AG04449 (cell line): ENCODE measurements at regions of chr17 and their contacts with region 1.

Region 1: DNA sequence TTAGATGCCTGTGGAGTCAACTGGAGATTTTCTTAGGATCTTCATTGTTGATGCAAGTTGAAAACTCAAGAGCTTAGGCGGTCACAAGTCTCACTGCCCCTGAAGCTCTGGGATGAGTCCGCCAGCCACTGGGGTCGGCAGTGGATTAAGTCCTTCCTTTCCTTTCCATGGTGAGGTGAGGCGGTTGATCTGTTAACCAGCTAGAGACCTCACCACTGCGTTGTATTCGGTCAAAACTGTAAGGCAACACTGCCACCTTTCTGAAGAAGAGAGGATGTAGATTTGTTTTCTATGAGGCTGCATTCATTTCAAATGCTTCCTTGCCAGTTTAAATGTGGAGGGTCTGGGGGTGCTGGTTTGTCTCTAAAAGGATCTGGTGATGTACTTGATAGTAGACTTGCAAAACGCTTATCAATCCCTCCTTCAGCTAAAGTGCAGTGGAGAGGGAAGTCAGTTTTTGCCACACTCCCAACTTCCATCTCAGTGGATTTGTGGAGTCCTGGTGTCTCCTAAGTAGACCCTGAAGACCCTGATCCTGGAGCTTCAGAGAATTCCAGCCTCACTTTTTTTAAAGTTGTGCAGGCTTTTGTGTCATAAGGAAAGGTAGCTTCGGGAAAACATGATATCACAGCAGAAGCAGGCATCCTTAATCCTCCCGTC is 1.7 kb downstream of the MYOCD start:
- DNase-seq: peak; percentile 45
- H3K4me3 ChIP-seq: peak overlapping the region; percentile 73
- CTCF ChIP-seq: peak; percentile 55

Region 2: GRCh38 chr17:12180644-12181261 is 486.7 kb before region 1 on chr17:
- CTCF ChIA-PET with region 1: interaction called, 51 read pairs
- POLR2A ChIA-PET with region 1: no interaction called
- DNase-seq: peak; percentile 24
- H3K4me3 ChIP-seq: no peak overlapping the region
- CTCF ChIP-seq: peak; percentile 46

Region 3: DNA sequence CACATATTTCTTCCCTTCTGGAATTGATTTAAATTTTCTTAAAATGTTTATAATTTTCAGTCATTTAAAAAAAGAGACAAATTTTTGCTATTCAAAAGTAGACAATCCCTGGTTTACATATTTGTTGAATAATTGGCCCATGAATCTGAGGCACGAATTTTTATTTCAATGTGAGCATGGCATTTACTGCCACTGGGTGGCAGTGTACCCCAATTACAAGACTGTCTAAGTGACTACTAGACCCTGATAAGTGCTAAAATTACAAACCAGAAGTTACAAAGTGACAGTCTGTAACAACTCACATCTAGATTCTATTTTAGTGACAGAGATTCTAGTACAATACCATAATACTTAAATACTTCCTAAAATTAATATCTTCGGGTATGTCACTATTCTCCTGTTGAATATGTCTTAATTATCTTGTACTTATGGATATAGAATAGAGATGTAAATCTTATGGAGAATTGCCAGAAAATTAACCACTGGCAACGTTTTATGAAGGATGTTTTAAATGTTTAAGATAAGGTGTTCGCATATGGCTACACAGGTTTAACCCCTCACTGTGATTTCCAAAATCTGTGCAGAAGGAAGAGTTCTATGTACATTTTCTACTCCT is 410.9 kb before region 1 on chr17:
- CTCF ChIA-PET with region 1: interaction called, 211 read pairs
- POLR2A ChIA-PET with region 1: no interaction called
- DNase-seq: peak; percentile 53
- H3K4me3 ChIP-seq: no peak overlapping the region
- CTCF ChIP-seq: peak; percentile 47

Region 4: GRCh38 chr17:12510535-12510934 is 156.9 kb before region 1 on chr17:
- CTCF ChIA-PET with region 1: interaction called, 13 read pairs
- POLR2A ChIA-PET with region 1: interaction called, 3 read pairs
- DNase-seq: no peak
- H3K4me3 ChIP-seq: no peak overlapping the region
- CTCF ChIP-seq: no peak

Region 5: GRCh38 chr17:12554251-12554650 is 113.2 kb before region 1 on chr17:
- CTCF ChIA-PET with region 1: interaction called, 140 read pairs
- POLR2A ChIA-PET with region 1: no interaction called
- DNase-seq: no peak
- H3K4me3 ChIP-seq: no peak overlapping the region
- CTCF ChIP-seq: no peak

Region 6: DNA sequence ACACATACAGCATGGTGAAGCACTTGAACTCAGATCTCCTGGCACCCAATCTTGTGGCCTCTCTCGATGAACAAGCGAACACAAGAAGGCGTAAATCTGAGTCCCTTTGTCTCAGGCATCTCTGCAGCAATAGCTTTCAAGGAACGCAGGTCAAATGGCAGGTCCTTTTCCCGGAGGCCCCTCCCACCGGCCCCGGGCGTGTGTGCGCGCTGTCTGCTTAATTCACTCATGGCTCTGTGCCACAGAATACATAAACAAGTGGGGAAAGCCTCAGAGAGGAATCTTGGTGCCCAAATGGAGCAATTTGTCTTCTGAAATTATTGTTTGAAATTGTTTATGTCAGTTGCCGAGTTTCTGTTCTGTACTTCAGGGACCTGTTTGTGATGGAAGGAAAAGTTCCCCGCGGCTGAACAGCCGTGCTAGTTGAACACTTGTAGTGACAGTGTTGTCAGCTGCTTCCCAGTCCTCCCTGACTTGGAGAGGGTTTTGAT is 13.0 kb after region 1 on chr17:
- CTCF ChIA-PET with region 1: interaction called, 20 read pairs
- POLR2A ChIA-PET with region 1: no interaction called
- DNase-seq: no peak
- H3K4me3 ChIP-seq: no peak overlapping the region
- CTCF ChIP-seq: no peak

Region 7: GRCh38 chr17:12815642-12816141 is 148.3 kb after region 1 on chr17:
- CTCF ChIA-PET with region 1: no interaction called
- POLR2A ChIA-PET with region 1: no interaction called
- DNase-seq: no peak
- H3K4me3 ChIP-seq: no peak overlapping the region
- CTCF ChIP-seq: no peak